ENCODE measurements at regions of chr20 and their contacts with region 1.

Region 1: GRCh38 chr20:1437235-1437904 is 29.3 kb downstream of the NSFL1C start:
- DNase-seq: peak; percentile 66
- H3K4me3 Mint-ChIP-seq: no peak overlapping the region
- H3K27ac Mint-ChIP-seq: no peak overlapping the region
- H3K4me1 Mint-ChIP-seq: peaks cover 35% of the 10 kb centered on the region
- H3K27me3 Mint-ChIP-seq: peaks cover 17% of the 10 kb centered on the region

Region 2: DNA sequence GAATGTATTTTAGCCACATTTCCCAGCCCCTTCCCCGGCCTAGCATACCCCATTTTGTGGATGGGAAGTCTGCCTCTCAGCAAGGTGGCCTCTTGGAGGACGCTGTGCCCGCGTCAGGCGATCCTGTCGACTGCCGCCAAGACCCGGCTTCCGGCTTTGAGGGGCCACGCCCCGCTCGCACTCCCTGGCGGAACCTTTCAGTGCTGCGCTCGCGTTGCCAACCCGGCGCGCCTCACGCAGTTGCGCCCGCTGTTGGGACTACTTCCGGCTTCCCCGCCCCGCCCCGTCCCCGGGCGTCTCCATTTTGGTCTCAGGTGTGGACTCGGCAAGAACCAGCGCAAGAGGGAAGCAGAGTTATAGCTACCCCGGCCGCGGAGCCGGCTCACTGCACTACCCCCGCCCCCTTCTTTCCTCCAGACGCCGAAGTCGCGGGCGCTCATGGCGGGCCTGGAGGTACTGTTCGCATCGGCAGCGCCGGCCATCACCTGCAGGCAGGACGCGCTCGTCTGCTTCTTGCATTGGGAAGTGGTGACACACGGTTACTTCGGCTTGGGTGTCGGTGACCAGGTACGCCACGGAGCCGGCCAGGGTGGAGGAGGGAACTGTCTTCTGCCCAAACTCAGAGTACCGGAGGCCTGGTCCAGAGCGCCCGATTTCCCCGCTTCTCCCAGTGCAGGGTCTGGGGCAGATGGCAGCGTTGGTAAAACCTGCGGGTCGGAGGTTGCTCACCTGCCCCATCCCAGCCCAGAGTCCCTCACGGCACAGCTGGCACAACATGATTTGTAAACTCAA is 318.8 kb before region 1 on chr20 and contains the start of gene PSMF1:
- intact Hi-C with region 1: loop called (anchors 5 kb)
- DNase-seq: peak; percentile 95
- H3K4me3 Mint-ChIP-seq: peak within 1 kb of the TSS; percentile 91
- H3K27ac Mint-ChIP-seq: peak within 1 kb of the TSS; percentile 81
- H3K4me1 Mint-ChIP-seq: peaks cover 56% of the 10 kb centered on the region
- H3K27me3 Mint-ChIP-seq: no peaks in the 10 kb centered on the region
- total RNA-seq, gene PSMF1: 185 and 189 TPM in 2 replicates

Region 3: GRCh38 chr20:1266167-1266973 is 171.0 kb before region 1 on chr20 and contains the start of gene SNPH:
- intact Hi-C with region 1: loop called (anchors 1 kb)
- DNase-seq: peak; percentile 63
- H3K4me3 Mint-ChIP-seq: peak within 1 kb of the TSS; percentile 89
- H3K27ac Mint-ChIP-seq: peak within 1 kb of the TSS; percentile 87
- H3K4me1 Mint-ChIP-seq: peaks cover 32% of the 10 kb centered on the region
- H3K27me3 Mint-ChIP-seq: peaks cover 3% of the 10 kb centered on the region
- total RNA-seq, gene SNPH: 2.1 and 2.5 TPM in 2 replicates

Region 4: GRCh38 chr20:1325173-1326030 is 112.0 kb before region 1 on chr20:
- intact Hi-C with region 1: loop called (anchors 1 kb)
- DNase-seq: peak; percentile 98
- H3K4me3 Mint-ChIP-seq: no peak overlapping the region
- H3K27ac Mint-ChIP-seq: no peak overlapping the region
- H3K4me1 Mint-ChIP-seq: peaks cover 14% of the 10 kb centered on the region
- H3K27me3 Mint-ChIP-seq: peaks cover 6% of the 10 kb centered on the region

Region 5: DNA sequence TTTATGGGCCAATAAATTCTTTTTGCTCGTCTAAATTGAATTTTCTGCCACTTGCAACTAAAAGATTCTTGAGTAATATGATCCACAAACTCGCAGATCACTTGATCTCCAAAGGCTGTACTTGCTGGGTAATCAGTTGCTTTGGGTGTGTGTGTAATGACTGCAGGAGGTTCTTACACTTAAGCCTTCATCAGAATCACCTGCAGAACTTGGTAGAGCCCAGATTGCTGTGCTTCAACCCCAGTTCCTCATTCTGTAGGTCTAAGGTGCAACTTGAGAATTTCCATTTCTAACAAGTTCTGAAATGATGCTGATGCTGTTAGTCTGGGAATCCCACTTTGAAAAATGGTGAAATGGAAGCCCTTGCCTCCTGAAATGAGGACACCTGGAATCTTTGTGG is 31.6 kb before region 1 on chr20:
- intact Hi-C with region 1: no loop called
- DNase-seq: no peak
- H3K4me3 Mint-ChIP-seq: no peak overlapping the region
- H3K27ac Mint-ChIP-seq: no peak overlapping the region
- H3K4me1 Mint-ChIP-seq: peaks cover 9% of the 10 kb centered on the region
- H3K27me3 Mint-ChIP-seq: peaks cover 16% of the 10 kb centered on the region

Region 6: DNA sequence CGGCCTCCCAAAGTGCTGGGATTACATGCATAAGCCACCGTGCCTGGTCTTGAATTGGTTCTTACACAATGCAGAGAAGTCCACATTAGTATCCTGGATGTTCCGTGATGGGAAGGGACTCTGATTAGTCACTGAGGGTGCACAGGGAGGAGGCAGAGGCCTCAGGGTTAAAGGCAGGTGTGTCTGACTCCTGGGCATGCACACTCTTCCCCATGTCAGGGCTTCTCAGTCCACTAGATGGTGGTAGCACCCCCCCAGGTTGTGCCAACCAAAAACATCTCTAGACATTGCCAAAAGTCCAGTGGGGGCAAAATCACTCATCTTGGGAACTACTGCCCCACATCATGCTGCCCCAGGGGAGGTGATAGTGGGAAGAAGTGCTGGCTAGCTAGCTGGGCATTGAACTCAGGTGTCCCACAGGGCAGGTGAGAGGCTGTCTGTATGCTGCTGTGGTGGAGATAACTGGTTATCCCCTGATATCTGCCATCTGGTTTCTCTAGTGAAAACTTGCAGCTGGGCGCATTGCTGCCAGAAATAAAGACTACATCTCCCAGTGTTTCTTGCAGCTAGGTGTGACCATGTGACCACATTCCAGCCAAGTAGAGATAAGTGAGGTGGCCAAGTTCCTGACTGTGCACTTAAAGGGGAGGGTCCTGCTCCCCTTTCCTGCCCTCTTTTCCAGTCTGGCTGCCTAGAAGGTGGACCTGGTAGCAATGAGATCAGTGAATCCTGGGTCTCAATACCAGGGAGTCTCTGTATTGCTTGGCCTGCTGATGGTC is 37.6 kb after region 1 on chr20:
- intact Hi-C with region 1: no loop called
- DNase-seq: no peak
- H3K4me3 Mint-ChIP-seq: no peak overlapping the region
- H3K27ac Mint-ChIP-seq: no peak overlapping the region
- H3K4me1 Mint-ChIP-seq: no peaks in the 10 kb centered on the region
- H3K27me3 Mint-ChIP-seq: no peaks in the 10 kb centered on the region

Region 7: GRCh38 chr20:1503564-1504227 is 66.3 kb after region 1 on chr20:
- intact Hi-C with region 1: loop called (anchors 1 kb)
- DNase-seq: peak; percentile 68
- H3K4me3 Mint-ChIP-seq: no peak overlapping the region
- H3K27ac Mint-ChIP-seq: no peak overlapping the region
- H3K4me1 Mint-ChIP-seq: peaks cover 5% of the 10 kb centered on the region
- H3K27me3 Mint-ChIP-seq: peaks cover 14% of the 10 kb centered on the region

Region 8: DNA sequence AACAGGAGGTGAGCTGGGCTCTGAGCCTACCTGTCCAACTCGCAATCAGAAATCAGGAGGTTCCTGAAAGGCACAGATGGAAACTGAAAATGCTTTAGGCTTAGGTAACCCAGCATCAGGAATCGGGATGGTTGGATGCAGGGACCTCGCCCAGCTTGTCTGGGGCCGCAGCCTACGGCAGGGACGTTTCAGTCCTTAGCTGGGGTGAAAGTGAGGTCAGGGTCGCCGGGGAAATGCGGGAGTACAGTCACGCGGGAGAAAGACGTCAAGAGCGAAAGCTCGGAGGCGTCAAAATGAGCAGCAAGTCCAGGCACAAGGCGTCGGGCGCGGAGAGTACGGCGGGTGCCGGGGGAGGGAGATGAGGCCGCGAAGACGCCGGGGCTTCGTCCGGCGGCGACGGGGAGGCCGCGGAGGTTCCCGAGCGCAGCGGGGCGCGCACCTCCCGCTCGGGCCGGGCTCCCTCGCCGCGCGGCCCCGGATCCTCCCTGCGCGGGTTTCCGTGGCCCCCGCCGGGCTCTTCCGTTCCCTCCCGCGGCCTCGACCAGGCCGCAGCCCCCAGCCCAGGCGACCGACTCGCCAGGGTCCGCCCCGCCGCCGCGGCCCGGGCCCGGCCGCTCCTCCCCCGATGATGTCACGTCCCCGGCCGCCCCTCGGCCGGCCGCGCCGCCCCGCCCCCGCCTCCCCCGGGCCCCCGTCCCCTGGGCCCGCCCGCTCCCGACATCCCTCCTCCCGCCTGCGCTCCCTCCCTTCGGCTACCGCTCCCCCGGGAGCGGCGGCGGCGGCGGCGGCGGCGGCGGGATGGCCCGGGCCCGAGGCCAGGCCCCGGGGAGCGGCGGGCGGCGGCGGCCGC is 1254.9 kb after region 1 on chr20 and contains the start of gene EBF4:
- intact Hi-C with region 1: no loop called
- DNase-seq: no peak
- H3K4me3 Mint-ChIP-seq: peak within 1 kb of the TSS; percentile 91
- H3K27ac Mint-ChIP-seq: peak within 1 kb of the TSS; percentile 83
- H3K4me1 Mint-ChIP-seq: peaks cover 35% of the 10 kb centered on the region
- H3K27me3 Mint-ChIP-seq: peaks cover 36% of the 10 kb centered on the region
- total RNA-seq, gene EBF4: 12.3 and 12.6 TPM in 2 replicates

Measured in activated T-helper 1 cell treated with anti-CD3 and anti-CD28 coated beads, Interleukin-12 subunit alpha, Interleukin-12 subunit beta, Interleukin-2, Interleukin-4 antibody, amounts not matched to agents 30 ng/mL and 10 ng/mL and 1 ng/mL, durations not matched to agents 14 hours and 24 hours and 36 hours (primary cell).